ENCODE measurements at regions of chr15 and their contacts with region 1.

Region 1: DNA sequence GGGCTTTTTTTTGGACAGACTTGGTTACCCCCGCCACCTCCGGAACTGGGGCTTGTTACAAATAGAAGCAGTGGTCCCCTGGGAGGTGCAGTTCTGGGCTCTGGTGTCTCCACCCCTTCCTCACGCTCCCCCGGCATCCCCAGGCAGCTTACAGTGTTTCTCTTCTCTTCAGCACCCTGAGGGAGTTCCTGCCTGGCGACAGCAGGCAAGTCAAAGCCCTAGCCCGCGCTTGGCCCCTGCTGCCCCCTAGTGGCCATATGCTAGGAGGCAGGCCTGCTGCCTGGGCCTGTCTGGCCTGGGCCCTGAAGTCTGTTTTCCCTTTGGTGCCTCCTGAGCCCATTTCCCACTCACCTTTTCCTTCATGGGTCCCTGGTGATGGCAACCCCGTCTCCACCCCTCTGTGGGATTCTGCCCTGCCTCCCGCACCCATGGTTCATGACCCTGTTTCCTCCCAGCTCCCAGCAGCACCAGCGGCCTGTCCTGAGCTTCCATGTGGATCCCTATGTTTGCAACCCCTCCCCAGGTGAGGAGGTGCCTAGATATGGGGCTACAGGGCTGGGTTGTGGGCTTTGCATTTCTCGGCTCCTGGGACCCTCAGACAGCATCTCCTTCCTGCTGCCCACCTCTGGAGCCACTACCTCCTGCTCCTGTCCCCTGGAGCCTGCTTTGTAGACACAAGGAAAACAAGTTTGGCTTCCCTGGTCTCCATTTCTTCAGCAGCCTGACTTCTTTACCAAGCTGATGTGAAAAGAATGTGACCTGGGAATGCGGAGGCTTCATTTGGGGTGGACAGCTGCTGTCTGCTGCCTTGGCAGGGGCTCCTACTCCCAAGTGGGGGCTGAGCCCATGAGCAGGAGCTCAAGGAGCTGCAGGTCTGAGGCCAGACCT is 2.2 kb downstream of the SNX22 start:
- DNase-seq: peak; percentile 87
- H3K4me3 Mint-ChIP-seq: peak overlapping the region; percentile 80
- H3K27ac Mint-ChIP-seq: peak overlapping the region; percentile 75
- H3K4me1 Mint-ChIP-seq: peaks cover 25% of the 10 kb centered on the region
- H3K27me3 Mint-ChIP-seq: peaks cover 5% of the 10 kb centered on the region

Region 2: GRCh38 chr15:63600616-63601025 is 553.1 kb before region 1 on chr15:
- intact Hi-C with region 1: loop called (anchors 10 kb)
- DNase-seq: peak; percentile 86
- H3K4me3 Mint-ChIP-seq: peak overlapping the region; percentile 88
- H3K27ac Mint-ChIP-seq: peak overlapping the region; percentile 87
- H3K4me1 Mint-ChIP-seq: peaks cover 51% of the 10 kb centered on the region
- H3K27me3 Mint-ChIP-seq: peaks cover 2% of the 10 kb centered on the region

Region 3: GRCh38 chr15:63668601-63669000 is 485.1 kb before region 1 on chr15:
- intact Hi-C with region 1: no loop called
- DNase-seq: no peak
- H3K4me3 Mint-ChIP-seq: peak overlapping the region; percentile 68
- H3K27ac Mint-ChIP-seq: peak overlapping the region; percentile 72
- H3K4me1 Mint-ChIP-seq: peaks cover 58% of the 10 kb centered on the region
- H3K27me3 Mint-ChIP-seq: no peaks in the 10 kb centered on the region

Region 4: GRCh38 chr15:64905119-64905831 is 751.6 kb after region 1 on chr15:
- intact Hi-C with region 1: no loop called
- DNase-seq: peak; percentile 71
- H3K4me3 Mint-ChIP-seq: peak overlapping the region; percentile 79
- H3K27ac Mint-ChIP-seq: peak overlapping the region; percentile 50
- H3K4me1 Mint-ChIP-seq: peaks cover 44% of the 10 kb centered on the region
- H3K27me3 Mint-ChIP-seq: peaks cover 11% of the 10 kb centered on the region

Measured in activated T-helper 1 cell treated with anti-CD3 and anti-CD28 coated beads, Interleukin-12 subunit alpha, Interleukin-12 subunit beta, Interleukin-2, Interleukin-4 antibody, amounts not matched to agents 30 ng/mL and 10 ng/mL and 1 ng/mL, durations not matched to agents 14 hours and 24 hours and 36 hours (primary cell).